PC-3 (cell line): ENCODE measurements at regions of chr3 and their contacts with region 1.

Region 1: GRCh38 chr3:161203485-161204098 is 17.5 kb upstream of the NMD3 start:
- DNase-seq: no peak
- ATAC-seq: no peak
- H3K4me3 ChIP-seq: no peak overlapping the region
- H3K27ac ChIP-seq: no peak overlapping the region
- H3K4me1 ChIP-seq: peaks cover 13% of the 10 kb centered on the region
- H3K27me3 ChIP-seq: no peaks in the 10 kb centered on the region
- CTCF ChIP-seq: no peak

Region 2: GRCh38 chr3:160739079-160739478 is 464.5 kb before region 1 on chr3:
- CTCF ChIA-PET with region 1: interaction called, 13 read pairs
- POLR2A ChIA-PET with region 1: no interaction called
- intact Hi-C with region 1: no loop called
- DNase-seq: no peak
- ATAC-seq: no peak
- H3K4me3 ChIP-seq: no peak overlapping the region
- H3K27ac ChIP-seq: no peak overlapping the region
- H3K4me1 ChIP-seq: no peaks in the 10 kb centered on the region
- H3K27me3 ChIP-seq: no peaks in the 10 kb centered on the region
- CTCF ChIP-seq: no peak

Region 3: GRCh38 chr3:160956806-160957205 is 246.8 kb before region 1 on chr3:
- CTCF ChIA-PET with region 1: no interaction called
- POLR2A ChIA-PET with region 1: no interaction called
- intact Hi-C with region 1: loop called (anchors 2 kb)
- DNase-seq: peak; percentile 74
- ATAC-seq: peak; percentile 92
- H3K4me3 ChIP-seq: no peak overlapping the region
- H3K27ac ChIP-seq: no peak overlapping the region
- H3K4me1 ChIP-seq: no peaks in the 10 kb centered on the region
- H3K27me3 ChIP-seq: no peaks in the 10 kb centered on the region
- CTCF ChIP-seq: peak; percentile 86

Region 4: GRCh38 chr3:161096771-161097355 is 106.7 kb before region 1 on chr3:
- CTCF ChIA-PET with region 1: interaction called, 3 read pairs
- POLR2A ChIA-PET with region 1: interaction called, 3 read pairs
- intact Hi-C with region 1: loop called (anchors 1 kb)
- DNase-seq: peak; percentile 72
- ATAC-seq: peak; percentile 77
- H3K4me3 ChIP-seq: no peak overlapping the region
- H3K27ac ChIP-seq: no peak overlapping the region
- H3K4me1 ChIP-seq: 0 out of 2 replicates have a peak, but pooled peaks cover 11% of the 10 kb centered on the region
- H3K27me3 ChIP-seq: no peaks in the 10 kb centered on the region
- CTCF ChIP-seq: peak; percentile 93

Region 5: DNA sequence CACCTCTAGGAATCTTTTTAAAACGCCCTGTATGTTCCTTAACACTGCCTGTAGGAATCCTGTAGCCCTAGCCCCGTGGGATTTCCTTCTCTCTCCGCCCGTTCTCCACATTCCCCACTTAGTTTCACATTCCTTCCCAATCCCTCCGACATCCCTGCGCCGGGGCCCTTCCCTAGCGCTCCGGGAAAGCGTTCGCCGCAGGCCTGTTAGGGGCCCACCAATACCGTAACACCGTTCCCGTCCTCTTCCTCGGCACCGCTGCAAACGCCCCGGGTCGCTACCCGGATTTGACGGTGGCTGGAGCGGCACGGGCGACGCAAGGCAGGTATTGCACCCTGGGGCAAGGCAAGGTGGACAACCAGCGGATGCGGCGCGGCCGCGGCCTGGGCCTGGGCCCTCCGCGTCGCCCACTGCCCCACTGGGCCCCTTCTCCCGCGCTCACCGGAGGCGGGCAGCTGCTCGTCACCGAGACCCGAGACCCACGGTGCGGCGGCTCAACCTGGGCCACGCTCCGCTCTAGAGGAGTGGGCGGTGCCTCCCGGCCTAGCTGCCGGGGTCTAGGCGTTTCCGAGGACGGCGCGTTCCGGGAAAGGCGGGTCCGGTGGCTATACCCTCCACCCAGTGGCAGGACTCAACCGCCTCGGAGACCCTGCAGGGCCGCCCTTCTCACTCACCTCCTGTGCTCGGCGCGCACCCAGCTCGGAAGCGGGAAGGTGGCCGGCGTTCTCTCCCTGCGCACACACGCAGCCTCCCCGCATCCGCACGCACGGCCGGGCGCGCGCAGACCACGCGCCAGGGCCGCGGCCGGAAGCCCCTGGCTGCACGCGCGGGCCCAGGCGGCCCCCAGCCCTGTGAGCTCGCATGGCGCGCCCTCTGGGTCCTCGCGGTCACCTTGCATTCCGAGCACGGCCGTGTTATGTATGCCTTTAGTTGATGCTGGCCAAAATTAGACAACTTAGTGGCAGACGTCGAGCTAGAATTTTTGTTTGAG is 98.7 kb before region 1 on chr3 and contains the start of gene B3GALNT1:
- CTCF ChIA-PET with region 1: no interaction called
- POLR2A ChIA-PET with region 1: interaction called, 3 read pairs
- intact Hi-C with region 1: loop called (anchors 2 kb)
- DNase-seq: peak; percentile 65
- ATAC-seq: peak; percentile 72
- H3K4me3 ChIP-seq: peak within 1 kb of the TSS; percentile 89
- H3K27ac ChIP-seq: peak within 1 kb of the TSS; percentile 55
- H3K4me1 ChIP-seq: peaks cover 72% of the 10 kb centered on the region
- H3K27me3 ChIP-seq: no peaks in the 10 kb centered on the region
- CTCF ChIP-seq: no peak
- total RNA-seq, gene B3GALNT1: 110 and 125 TPM in 2 replicates

Region 6: GRCh38 chr3:161171113-161171512 is 32.5 kb before region 1 on chr3:
- CTCF ChIA-PET with region 1: no interaction called
- POLR2A ChIA-PET with region 1: no interaction called
- intact Hi-C with region 1: no loop called
- DNase-seq: peak; percentile 71
- ATAC-seq: peak; percentile 92
- H3K4me3 ChIP-seq: no peak overlapping the region
- H3K27ac ChIP-seq: no peak overlapping the region
- H3K4me1 ChIP-seq: peaks cover 24% of the 10 kb centered on the region
- H3K27me3 ChIP-seq: no peaks in the 10 kb centered on the region
- CTCF ChIP-seq: no peak